ENCODE measurements at regions of chr7 and their contacts with region 1.

Region 1: DNA sequence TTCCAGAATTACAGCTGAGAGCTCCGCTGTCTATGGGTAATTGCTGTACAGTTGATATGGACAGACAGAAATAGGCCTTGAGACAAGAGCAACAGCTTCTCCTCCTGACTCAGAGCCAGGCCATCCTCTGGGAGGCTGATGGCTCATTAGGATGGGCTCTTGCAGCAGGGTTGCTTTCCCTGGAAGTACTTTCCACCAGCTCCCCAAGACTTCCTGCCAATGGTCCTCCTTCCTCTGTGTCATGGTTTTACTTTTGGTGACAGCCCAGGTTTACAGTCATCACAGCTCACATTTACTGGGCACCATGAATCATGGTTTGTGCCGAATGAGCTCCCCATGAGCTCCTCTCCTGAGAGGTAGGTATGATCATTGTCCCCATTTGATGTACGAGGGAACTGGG is 131.8 kb downstream of the HECW1 start:
- DNase-seq: peak; percentile 6
- H3K4me3 ChIP-seq: no peak overlapping the region
- H3K27ac ChIP-seq: no peak overlapping the region
- H3K4me1 ChIP-seq: no peaks in the 10 kb centered on the region
- H3K27me3 ChIP-seq: no peaks in the 10 kb centered on the region
- CTCF ChIP-seq: no peak

Region 2: GRCh38 chr7:42709284-42709683 is 534.9 kb before region 1 on chr7:
- CTCF ChIA-PET with region 1: no interaction called
- dilution Hi-C with region 1: no loop called
- in situ Hi-C with region 1: no loop called
- intact Hi-C with region 1: no loop called
- DNase-seq: no peak
- H3K4me3 ChIP-seq: no peak overlapping the region
- H3K27ac ChIP-seq: no peak overlapping the region
- H3K4me1 ChIP-seq: no peaks in the 10 kb centered on the region
- H3K27me3 ChIP-seq: no peaks in the 10 kb centered on the region
- CTCF ChIP-seq: no peak

Region 3: GRCh38 chr7:43199371-43200160 is 44.7 kb before region 1 on chr7:
- CTCF ChIA-PET with region 1: no interaction called
- dilution Hi-C with region 1: loop called (anchors 5 kb)
- in situ Hi-C with region 1: no loop called
- intact Hi-C with region 1: no loop called
- DNase-seq: no peak
- H3K4me3 ChIP-seq: no peak overlapping the region
- H3K27ac ChIP-seq: no peak overlapping the region
- H3K4me1 ChIP-seq: no peaks in the 10 kb centered on the region
- H3K27me3 ChIP-seq: no peaks in the 10 kb centered on the region
- CTCF ChIP-seq: no peak

Measured in mammary epithelial cell (primary cell).